Lower leg skin (tissue), 4 donors: ENCODE measurements at regions of chr10 and their contacts with region 1.

Region 1: DNA sequence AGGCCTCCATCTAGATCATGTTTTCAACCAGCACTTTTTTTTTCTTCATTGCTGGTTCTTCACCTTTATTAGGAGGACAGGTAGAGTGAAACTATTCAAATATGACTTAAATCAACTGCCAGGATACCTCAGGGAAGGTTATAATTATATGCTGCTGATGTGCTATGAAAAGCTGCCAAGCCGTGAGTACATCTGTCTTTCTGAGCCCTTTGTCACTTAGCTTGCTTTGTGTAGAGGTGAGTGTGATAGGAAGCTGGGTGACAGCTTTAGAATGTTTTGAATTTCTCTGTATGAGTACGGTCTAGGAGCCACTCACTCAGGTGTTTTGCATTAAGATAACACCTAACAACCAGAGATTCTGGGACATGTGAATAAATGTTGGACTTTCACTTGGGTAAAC is 365.2 kb downstream of the OTUD1 start:
- DNase-seq: no peak
- H3K4me3 ChIP-seq: no peak overlapping the region
- CTCF ChIP-seq: no peak
- POLR2A ChIP-seq: no peak

Region 2: GRCh38 chr10:23850631-23851030 is 46.5 kb after region 1 on chr10:
- intact Hi-C with region 1: loop called (anchors 1 kb)
- DNase-seq: no peak
- H3K4me3 ChIP-seq: no peak overlapping the region
- CTCF ChIP-seq: no peak
- POLR2A ChIP-seq: no peak